Tibial artery (tissue), 4 donors: ENCODE measurements at regions of chr1 and their contacts with region 1.

Region 1: DNA sequence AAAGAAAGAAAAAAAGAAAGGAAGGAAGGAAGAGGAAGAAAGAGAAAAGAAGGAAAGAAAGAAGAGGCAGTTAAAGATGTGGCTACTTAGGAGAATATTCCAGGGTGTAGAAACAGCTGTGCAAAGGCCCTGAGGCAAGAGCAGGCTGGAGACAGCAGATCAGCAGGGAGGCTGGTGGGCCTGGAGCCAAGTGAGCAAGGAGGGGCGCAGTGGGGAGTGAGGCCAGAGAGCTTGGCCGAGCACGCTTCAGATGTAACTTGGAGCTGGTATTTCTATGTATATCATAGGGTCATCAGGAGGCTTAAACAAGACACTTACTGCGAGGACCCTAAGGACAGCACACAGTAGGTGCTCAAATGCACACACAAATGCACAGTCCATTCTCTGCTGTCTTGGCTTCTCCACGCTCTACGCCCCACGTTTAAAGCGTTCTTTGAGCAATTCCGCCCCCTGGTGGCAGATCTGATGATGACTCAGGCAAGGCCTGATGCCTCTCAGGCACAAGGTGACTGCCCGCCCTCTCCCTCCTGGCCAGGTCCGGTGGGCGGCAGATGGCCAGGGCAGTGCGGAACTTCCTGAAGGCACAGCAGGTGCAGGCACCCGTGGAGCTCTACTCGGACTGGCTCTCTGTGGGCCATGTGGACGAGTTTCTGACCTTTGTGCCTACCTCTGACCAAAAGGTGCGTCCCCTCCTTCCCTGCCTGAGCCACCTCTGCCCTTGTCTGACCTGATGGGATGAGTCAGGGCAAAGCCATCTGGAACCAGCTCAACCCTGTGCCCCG is 11.9 kb upstream of the PADI3 start:
- DNase-seq: peak; percentile 80 to 85
- H3K4me3 ChIP-seq: no peak overlapping the region
- H3K27ac ChIP-seq: no peak overlapping the region
- H3K4me1 ChIP-seq: peaks cover 0 to 6% (median 2%) of the 10 kb centered on the region in 4 donors
- H3K27me3 ChIP-seq: peaks cover 0 to 5% of the 10 kb centered on the region in 2 donors
- CTCF ChIP-seq: peak; percentile 87 to 92

Region 2: GRCh38 chr1:17059739-17060460 is 177.1 kb before region 1 on chr1:
- intact Hi-C with region 1: loop called (anchors 5 kb)
- DNase-seq: peak; percentile 27 to 63
- H3K4me3 ChIP-seq: no peak overlapping the region
- H3K27ac ChIP-seq: no peak overlapping the region
- H3K4me1 ChIP-seq: no peaks in the 10 kb centered on the region
- H3K27me3 ChIP-seq: no peaks in the 10 kb centered on the region
- CTCF ChIP-seq: peak; percentile 51 to 54

Region 3: GRCh38 chr1:17125756-17126237 is 111.2 kb before region 1 on chr1:
- intact Hi-C with region 1: loop called (anchors 1 kb)
- DNase-seq: peak; percentile 78 to 86
- H3K4me3 ChIP-seq: peak overlapping the region in 1 of 2 donors; percentile 12
- H3K27ac ChIP-seq: no peak overlapping the region
- H3K4me1 ChIP-seq: peaks cover 0 to 23% (median 8%) of the 10 kb centered on the region in 4 donors
- H3K27me3 ChIP-seq: peaks cover 0 to 3% of the 10 kb centered on the region in 2 donors
- CTCF ChIP-seq: peak; percentile 94 to 98

Region 4: GRCh38 chr1:17148950-17149608 is 87.9 kb before region 1 on chr1:
- intact Hi-C with region 1: no loop called
- DNase-seq: no peak
- H3K4me3 ChIP-seq: no peak overlapping the region
- H3K27ac ChIP-seq: no peak overlapping the region
- H3K4me1 ChIP-seq: no peaks in the 10 kb centered on the region
- H3K27me3 ChIP-seq: peaks cover 0 to 61% of the 10 kb centered on the region in 2 donors
- CTCF ChIP-seq: no peak

Region 5: GRCh38 chr1:17348125-17348979 is 111.4 kb after region 1 on chr1:
- intact Hi-C with region 1: no loop called
- DNase-seq: no peak
- H3K4me3 ChIP-seq: no peak overlapping the region
- H3K27ac ChIP-seq: no peak overlapping the region
- H3K4me1 ChIP-seq: no peaks in the 10 kb centered on the region
- H3K27me3 ChIP-seq: peaks cover 0 to 57% of the 10 kb centered on the region in 2 donors
- CTCF ChIP-seq: no peak

Region 6: DNA sequence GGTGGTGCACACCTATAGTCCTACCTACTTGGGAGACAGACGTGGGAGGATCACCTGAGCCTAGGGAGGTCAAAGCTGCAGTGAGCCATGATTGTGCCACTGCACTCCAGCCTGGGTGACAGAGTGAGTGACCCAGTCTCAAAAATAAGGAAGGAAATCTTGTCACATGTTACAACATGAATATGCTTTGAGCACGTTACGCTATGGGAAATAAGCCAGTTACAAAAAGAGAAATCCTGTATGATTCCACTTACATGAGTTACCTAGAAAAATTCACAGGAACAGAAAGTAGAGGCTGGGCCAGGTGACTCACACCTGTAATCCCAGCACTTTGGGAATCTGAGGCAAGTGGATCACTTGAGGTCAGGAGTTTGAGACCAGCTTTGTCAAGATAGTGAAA is 128.3 kb after region 1 on chr1:
- intact Hi-C with region 1: no loop called
- DNase-seq: no peak
- H3K4me3 ChIP-seq: no peak overlapping the region
- H3K27ac ChIP-seq: no peak overlapping the region
- H3K4me1 ChIP-seq: no peaks in the 10 kb centered on the region
- H3K27me3 ChIP-seq: peaks cover 0 to 68% of the 10 kb centered on the region in 2 donors
- CTCF ChIP-seq: no peak